A549 (cell line): ENCODE measurements at regions of chr17 and their contacts with region 1.

Region 1: GRCh38 chr17:4891411-4892342 is 7.7 kb upstream of the C17orf107 start:
- DNase-seq: no peak
- ATAC-seq: no peak
- H3K4me3 ChIP-seq: no peak overlapping the region
- H3K27ac ChIP-seq: no peak overlapping the region
- H3K4me1 ChIP-seq: no peaks in the 10 kb centered on the region
- CTCF ChIP-seq: no peak
- EP300 ChIP-seq: no peak
- POLR2A ChIP-seq: no peak
- RAD21 ChIP-seq: no peak

Region 2: GRCh38 chr17:4823373-4824089 is 68.1 kb before region 1 on chr17:
- CTCF ChIA-PET with region 1: interaction called, 21 read pairs
- POLR2A ChIA-PET with region 1: no interaction called
- DNase-seq: no peak
- ATAC-seq: peak; percentile 18 to 49; a peak in 3 of 6 replicates
- H3K4me3 ChIP-seq: no peak overlapping the region
- H3K27ac ChIP-seq: no peak overlapping the region
- H3K4me1 ChIP-seq: no peaks in the 10 kb centered on the region
- CTCF ChIP-seq: no peak
- EP300 ChIP-seq: no peak
- POLR2A ChIP-seq: no peak
- RAD21 ChIP-seq: no peak

Region 3: GRCh38 chr17:4966844-4967538 is 75.3 kb after region 1 on chr17:
- CTCF ChIA-PET with region 1: no interaction called
- POLR2A ChIA-PET with region 1: no interaction called
- DNase-seq: peak; percentile 100
- ATAC-seq: peak; percentile 89 to 95
- H3K4me3 ChIP-seq: peak overlapping the region; percentile 63
- H3K27ac ChIP-seq: peak overlapping the region; percentile 94 to 95
- H3K4me1 ChIP-seq: peaks cover 21% of the 10 kb centered on the region
- CTCF ChIP-seq: no peak
- EP300 ChIP-seq: no peak
- POLR2A ChIP-seq: peak; percentile 59; the same call in 1 of the 2 replicates
- RAD21 ChIP-seq: peak in 1 of 2 experiments; percentile 10; a peak in 1 of 5 replicates

Region 4: DNA sequence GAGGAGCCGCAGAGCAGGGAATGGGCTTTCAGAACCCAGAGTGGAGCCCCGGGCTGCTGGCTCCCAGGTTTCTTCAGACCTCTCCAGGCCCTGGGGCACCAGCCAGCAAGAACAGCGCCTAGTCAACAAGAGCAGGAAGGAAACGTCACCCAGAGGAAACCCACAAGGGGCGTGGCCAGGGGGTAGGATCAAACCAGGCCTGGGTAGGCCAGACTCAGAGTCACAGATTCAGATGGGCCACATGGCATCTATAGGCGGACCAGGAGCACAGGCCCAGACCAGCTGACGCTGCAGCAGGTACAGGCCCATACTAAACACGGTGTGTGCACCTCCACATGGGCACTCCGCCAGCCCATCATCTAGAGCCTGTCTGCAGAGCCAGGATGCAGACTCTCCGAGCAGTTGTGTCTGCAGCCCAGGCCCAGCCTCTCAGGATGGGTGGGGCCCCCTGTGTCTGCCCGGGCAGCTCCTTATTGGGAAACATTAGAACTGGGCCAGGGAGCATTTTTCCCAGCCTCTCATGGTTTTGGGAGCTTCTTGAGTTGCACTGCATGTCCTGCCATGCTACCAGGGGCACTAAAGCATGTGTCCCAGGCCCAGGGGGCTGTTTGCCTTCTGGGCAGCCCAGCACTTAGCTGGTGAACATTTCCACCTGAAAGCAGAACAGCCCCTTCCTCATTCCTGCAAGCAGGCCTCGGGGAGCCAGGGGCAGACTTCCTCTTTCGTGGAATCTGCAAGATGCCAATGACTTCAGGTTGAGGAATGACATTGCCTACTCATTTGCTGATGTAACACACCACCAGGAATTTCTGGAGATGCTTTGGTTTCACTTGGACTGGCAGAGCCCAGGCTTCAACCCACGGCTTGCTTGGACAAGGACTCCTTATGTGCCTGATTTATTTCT is 693.0 kb after region 1 on chr17 and contains the start of gene NLRP1:
- CTCF ChIA-PET with region 1: no interaction called
- POLR2A ChIA-PET with region 1: no interaction called
- DNase-seq: peak in 1 of 2 experiments; percentile 31
- ATAC-seq: peak; percentile 21 to 49; a peak in 4 of 6 replicates
- H3K4me3 ChIP-seq: no peak within 1 kb of the TSS
- H3K27ac ChIP-seq: peak within 1 kb of the TSS in 1 of 2 experiments; percentile 55; a peak in 3 of 6 replicates
- H3K4me1 ChIP-seq: peaks cover 15% of the 10 kb centered on the region; the same call in 2 of the 3 replicates
- CTCF ChIP-seq: no peak
- EP300 ChIP-seq: no peak
- POLR2A ChIP-seq: no peak
- RAD21 ChIP-seq: no peak
- polyA plus RNA-seq, gene NLRP1: 1.1 and 1.2 TPM in 2 replicates